Naive thymus-derived CD4-positive, alpha-beta T cell (primary cell): ENCODE measurements at regions of chr22 and their contacts with region 1.

Region 1: DNA sequence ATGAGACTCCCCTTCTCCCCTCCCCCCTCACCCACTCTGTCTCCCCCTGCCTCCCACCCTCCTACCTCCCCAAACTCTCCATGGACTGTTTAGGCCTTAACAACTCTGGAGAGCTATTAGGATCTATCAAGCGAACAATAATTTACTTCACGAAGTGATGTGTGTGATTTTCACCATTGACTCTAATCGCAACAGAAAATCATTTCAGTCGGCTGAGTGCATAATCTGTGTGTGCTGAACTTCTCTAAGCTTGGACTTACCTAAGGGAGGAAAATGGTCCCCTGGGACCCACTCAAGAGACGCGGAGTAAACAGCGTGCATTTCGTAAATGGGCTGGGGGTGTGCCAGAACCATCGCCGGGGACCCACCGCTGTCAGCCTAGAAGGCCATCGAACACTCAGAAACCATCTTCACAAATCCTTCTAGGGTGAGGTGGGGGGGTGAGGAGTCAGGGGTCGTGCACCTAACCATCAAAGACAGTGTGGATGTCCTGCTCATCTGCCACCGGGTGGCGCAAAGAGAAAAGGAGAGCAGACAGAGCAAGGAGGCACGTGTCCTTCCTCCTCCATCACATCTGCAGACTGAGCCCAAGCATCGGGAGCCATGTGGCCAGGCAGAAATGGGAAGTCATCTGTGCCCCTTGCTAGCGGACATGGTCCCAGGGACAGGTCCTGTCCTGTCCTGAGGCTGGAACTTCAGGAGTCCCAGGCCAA is 62.1 kb upstream of the NUP50 start:
- DNase-seq: peak in 7 of 9 donors; percentile 6 to 47 (median 26)
- ATAC-seq: peak; percentile 79
- H3K4me3 ChIP-seq: no peak overlapping the region
- H3K4me3 Mint-ChIP-seq: no peak overlapping the region
- H3K27ac ChIP-seq: no peak overlapping the region
- H3K27ac Mint-ChIP-seq: peak overlapping the region in 1 of 9 donors; percentile 46
- H3K4me1 ChIP-seq: no peaks in the 10 kb centered on the region
- H3K4me1 Mint-ChIP-seq: peaks cover 0 to 5% (median 0%) of the 10 kb centered on the region in 7 donors
- H3K27me3 ChIP-seq: peaks cover 0 to under 1% of the 10 kb centered on the region in 2 donors
- H3K27me3 Mint-ChIP-seq: peaks cover 8 to 27% (median 25%) of the 10 kb centered on the region in 5 donors

Region 2: GRCh38 chr22:44935724-44936123 is 165.9 kb before region 1 on chr22:
- CTCF ChIA-PET with region 1: no interaction called
- POLR2A ChIA-PET with region 1: no interaction called
- intact Hi-C with region 1: no loop called
- DNase-seq: no peak
- ATAC-seq: no peak
- H3K4me3 ChIP-seq: no peak overlapping the region
- H3K4me3 Mint-ChIP-seq: no peak overlapping the region
- H3K27ac ChIP-seq: no peak overlapping the region
- H3K27ac Mint-ChIP-seq: no peak overlapping the region
- H3K4me1 ChIP-seq: no peaks in the 10 kb centered on the region
- H3K4me1 Mint-ChIP-seq: no peaks in the 10 kb centered on the region
- H3K27me3 ChIP-seq: no peaks in the 10 kb centered on the region
- H3K27me3 Mint-ChIP-seq: peaks cover 0 to 11% (median 7%) of the 10 kb centered on the region in 5 donors

Region 3: DNA sequence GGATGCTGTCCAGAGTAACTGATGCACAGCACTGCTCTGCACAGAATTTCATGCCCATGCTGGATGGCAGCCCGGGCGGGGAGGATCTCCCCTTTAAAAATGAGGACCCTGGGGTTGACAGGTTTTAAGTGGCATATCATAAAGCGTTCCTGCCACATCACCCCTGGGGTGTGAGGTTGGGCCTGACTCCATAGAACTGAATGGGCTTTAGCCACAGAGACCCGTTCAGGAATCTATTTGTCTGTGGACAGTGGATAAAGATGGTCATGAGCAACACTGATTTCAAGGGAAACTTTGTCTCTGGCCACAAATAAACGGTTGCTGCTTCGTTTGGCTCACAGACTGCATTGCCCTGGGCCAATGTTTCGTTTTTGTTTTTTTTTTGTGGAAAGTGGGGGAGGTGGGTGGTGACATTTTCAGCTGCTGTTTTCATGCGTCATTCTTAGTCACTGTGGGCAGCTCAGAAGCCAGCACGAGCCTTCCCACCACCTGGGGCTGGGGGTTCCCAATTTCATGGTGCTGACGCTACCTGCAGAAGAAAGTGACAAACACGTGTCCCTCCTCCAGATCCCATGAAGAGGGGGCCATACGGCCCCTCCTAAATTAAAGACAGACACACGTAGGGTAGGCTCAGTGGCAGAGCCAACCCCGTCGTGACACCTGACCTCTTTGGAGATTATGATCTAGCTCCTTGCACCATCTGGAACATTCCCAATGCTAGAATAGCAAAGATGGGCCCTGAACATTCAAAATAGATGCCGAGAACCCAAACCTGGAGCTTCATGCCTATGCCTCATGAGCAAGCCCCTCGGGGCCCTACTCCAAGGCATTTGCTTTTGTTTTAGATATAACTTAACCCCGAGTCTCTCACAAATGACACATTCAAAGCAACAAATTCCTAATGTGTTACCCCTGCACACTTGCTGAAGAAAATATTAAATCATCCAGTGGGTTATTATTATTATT is 37.1 kb before region 1 on chr22:
- CTCF ChIA-PET with region 1: no interaction called
- POLR2A ChIA-PET with region 1: no interaction called
- intact Hi-C with region 1: no loop called
- DNase-seq: peak in 2 of 9 donors; percentile 17 to 67
- ATAC-seq: peak; percentile 26
- H3K4me3 ChIP-seq: no peak overlapping the region
- H3K4me3 Mint-ChIP-seq: peak overlapping the region in 1 of 10 donors; percentile 17
- H3K27ac ChIP-seq: no peak overlapping the region
- H3K27ac Mint-ChIP-seq: peak overlapping the region in 2 of 9 donors; percentile 19 to 59
- H3K4me1 ChIP-seq: no peaks in the 10 kb centered on the region
- H3K4me1 Mint-ChIP-seq: peaks cover 0 to 7% (median 0%) of the 10 kb centered on the region in 7 donors
- H3K27me3 ChIP-seq: no peaks in the 10 kb centered on the region
- H3K27me3 Mint-ChIP-seq: peaks cover 0 to 14% (median 0%) of the 10 kb centered on the region in 5 donors

Region 4: GRCh38 chr22:45208993-45209801 is 107.5 kb after region 1 on chr22:
- CTCF ChIA-PET with region 1: interaction called, 3 read pairs
- POLR2A ChIA-PET with region 1: no interaction called
- intact Hi-C with region 1: loop called in 1 of 2 experiments (anchors 5 kb)
- DNase-seq: peak in 5 of 9 donors; percentile 17 to 49 (median 36)
- ATAC-seq: peak; percentile 62
- H3K4me3 ChIP-seq: no peak overlapping the region
- H3K4me3 Mint-ChIP-seq: no peak overlapping the region
- H3K27ac ChIP-seq: no peak overlapping the region
- H3K27ac Mint-ChIP-seq: peak overlapping the region in 2 of 9 donors; percentile 62 to 74
- H3K4me1 ChIP-seq: no peaks in the 10 kb centered on the region
- H3K4me1 Mint-ChIP-seq: peaks cover 0 to 9% (median 0%) of the 10 kb centered on the region in 7 donors
- H3K27me3 ChIP-seq: no peaks in the 10 kb centered on the region
- H3K27me3 Mint-ChIP-seq: no peaks in the 10 kb centered on the region

Region 5: GRCh38 chr22:45435544-45436139 is 334.0 kb after region 1 on chr22:
- CTCF ChIA-PET with region 1: no interaction called
- POLR2A ChIA-PET with region 1: no interaction called
- intact Hi-C with region 1: loop called in 1 of 2 experiments (anchors 5 kb)
- DNase-seq: peak; percentile 60 to 79 (median 73)
- ATAC-seq: peak; percentile 93
- H3K4me3 ChIP-seq: no peak overlapping the region
- H3K4me3 Mint-ChIP-seq: peak overlapping the region in 5 of 10 donors; percentile 12 to 65 (median 32)
- H3K27ac ChIP-seq: no peak overlapping the region
- H3K27ac Mint-ChIP-seq: peak overlapping the region in 6 of 9 donors; percentile 31 to 71 (median 60)
- H3K4me1 ChIP-seq: peaks cover 2 to 6% of the 10 kb centered on the region in 2 donors
- H3K4me1 Mint-ChIP-seq: peaks cover 9 to 22% (median 13%) of the 10 kb centered on the region in 7 donors
- H3K27me3 ChIP-seq: no peaks in the 10 kb centered on the region
- H3K27me3 Mint-ChIP-seq: peaks cover 0 to 7% (median 0%) of the 10 kb centered on the region in 5 donors

Region 6: GRCh38 chr22:45553351-45554039 is 451.8 kb after region 1 on chr22:
- CTCF ChIA-PET with region 1: no interaction called
- POLR2A ChIA-PET with region 1: no interaction called
- intact Hi-C with region 1: loop called in 1 of 2 experiments (anchors 5 kb)
- DNase-seq: peak; percentile 8 to 63 (median 30)
- ATAC-seq: peak; percentile 68
- H3K4me3 ChIP-seq: no peak overlapping the region
- H3K4me3 Mint-ChIP-seq: no peak overlapping the region
- H3K27ac ChIP-seq: no peak overlapping the region
- H3K27ac Mint-ChIP-seq: peak overlapping the region in 1 of 9 donors; percentile 47
- H3K4me1 ChIP-seq: no peaks in the 10 kb centered on the region
- H3K4me1 Mint-ChIP-seq: peaks cover 0 to 3% (median 0%) of the 10 kb centered on the region in 7 donors
- H3K27me3 ChIP-seq: no peaks in the 10 kb centered on the region
- H3K27me3 Mint-ChIP-seq: peaks cover 0 to 16% (median 4%) of the 10 kb centered on the region in 5 donors